Activated CD4-positive, alpha-beta T cell treated with anti-CD3 and anti-CD28 coated beads for 36 hours (primary cell): ENCODE measurements at regions of chr17 and their contacts with region 1.

Region 1: DNA sequence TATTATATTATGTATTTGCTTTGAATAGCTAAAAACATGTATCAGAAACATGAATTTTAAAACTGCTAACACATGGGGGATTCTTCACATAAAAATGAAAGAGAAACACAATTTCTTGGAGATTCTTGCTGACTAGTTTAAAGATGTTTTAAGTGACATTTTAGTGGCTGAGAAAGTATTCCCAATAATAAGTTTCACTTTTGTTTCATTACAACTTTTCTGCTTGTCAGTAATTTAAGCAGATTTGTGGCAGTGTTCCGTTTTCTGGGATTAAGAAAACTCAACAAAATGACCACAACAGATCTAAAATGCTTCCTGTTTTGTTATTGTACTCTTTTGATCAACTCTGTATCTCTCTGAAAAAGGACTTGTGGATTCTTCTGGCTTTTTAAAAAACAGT is 75.9 kb downstream of the NLK start:
- DNase-seq: no peak
- ATAC-seq: peak; percentile 51
- H3K4me3 Mint-ChIP-seq: no peak overlapping the region
- H3K27ac Mint-ChIP-seq: peak overlapping the region; percentile 53
- H3K4me1 Mint-ChIP-seq: peaks cover 34% of the 10 kb centered on the region
- H3K27me3 Mint-ChIP-seq: no peaks in the 10 kb centered on the region

Region 2: DNA sequence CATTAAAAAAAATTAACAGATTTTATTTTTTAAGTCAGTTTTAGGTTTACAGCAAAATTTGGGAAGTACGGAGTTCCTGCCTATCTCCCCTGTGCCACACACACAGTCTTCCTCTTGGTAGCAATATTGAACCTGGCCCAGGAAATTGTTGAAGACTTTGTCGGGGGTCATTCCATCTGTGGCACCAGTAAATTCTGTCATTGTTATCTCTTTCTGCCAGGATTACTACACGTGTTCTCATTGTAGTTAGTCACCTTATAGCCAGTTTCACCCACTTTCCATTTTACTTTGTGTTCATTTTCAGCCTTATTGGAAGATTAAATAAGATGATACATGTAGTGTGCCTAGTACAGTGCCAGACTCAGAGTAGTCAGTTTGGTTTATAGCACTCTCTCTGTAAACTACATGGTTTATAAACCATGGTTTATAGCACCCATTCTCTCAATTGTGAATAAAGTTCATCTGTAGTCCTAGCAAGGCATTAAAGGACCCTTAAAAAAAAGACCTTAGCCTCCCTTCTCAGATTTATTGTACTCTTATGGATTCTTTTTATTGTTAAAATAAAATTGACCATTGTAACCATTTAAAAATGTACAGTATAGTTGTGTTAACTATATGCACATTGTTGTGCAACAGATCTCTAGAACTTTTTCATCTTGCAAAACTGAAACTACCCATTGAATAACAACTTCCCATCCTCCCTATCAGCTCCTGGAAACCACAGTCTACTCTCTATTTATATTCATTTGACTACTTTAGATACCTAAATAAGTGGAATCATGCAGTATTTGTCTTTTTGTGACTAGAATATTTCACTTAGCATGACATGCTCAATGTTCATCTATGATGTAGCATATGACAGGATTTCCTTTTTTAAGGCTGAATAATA is 39.8 kb before region 1 on chr17:
- CTCF ChIA-PET with region 1: no interaction called
- POLR2A ChIA-PET with region 1: no interaction called
- intact Hi-C with region 1: loop called in 1 of 2 experiments (anchors 5 kb)
- DNase-seq: no peak
- ATAC-seq: peak; percentile 36
- H3K4me3 Mint-ChIP-seq: no peak overlapping the region
- H3K27ac Mint-ChIP-seq: no peak overlapping the region
- H3K4me1 Mint-ChIP-seq: peaks cover 44% of the 10 kb centered on the region
- H3K27me3 Mint-ChIP-seq: no peaks in the 10 kb centered on the region